ENCODE measurements at regions of chr16 and their contacts with region 1.

Region 1: GRCh38 chr16:66872943-66873684 is 7.2 kb upstream of the PDP2 start:
- DNase-seq: peak; percentile 80 to 94 (median 82)
- H3K4me3 ChIP-seq: peak overlapping the region in 1 of 2 donors; percentile 52
- H3K4me3 Mint-ChIP-seq: peak overlapping the region; percentile 61 to 90 (median 82)
- H3K27ac ChIP-seq: peak overlapping the region; percentile 36
- H3K27ac Mint-ChIP-seq: peak overlapping the region; percentile 75 to 95 (median 86)
- H3K4me1 ChIP-seq: peaks cover 22% of the 10 kb centered on the region
- H3K4me1 Mint-ChIP-seq: peaks cover 18 to 37% (median 23%) of the 10 kb centered on the region in 4 donors
- H3K27me3 ChIP-seq: no peaks in the 10 kb centered on the region
- H3K27me3 Mint-ChIP-seq: no peaks in the 10 kb centered on the region

Region 2: DNA sequence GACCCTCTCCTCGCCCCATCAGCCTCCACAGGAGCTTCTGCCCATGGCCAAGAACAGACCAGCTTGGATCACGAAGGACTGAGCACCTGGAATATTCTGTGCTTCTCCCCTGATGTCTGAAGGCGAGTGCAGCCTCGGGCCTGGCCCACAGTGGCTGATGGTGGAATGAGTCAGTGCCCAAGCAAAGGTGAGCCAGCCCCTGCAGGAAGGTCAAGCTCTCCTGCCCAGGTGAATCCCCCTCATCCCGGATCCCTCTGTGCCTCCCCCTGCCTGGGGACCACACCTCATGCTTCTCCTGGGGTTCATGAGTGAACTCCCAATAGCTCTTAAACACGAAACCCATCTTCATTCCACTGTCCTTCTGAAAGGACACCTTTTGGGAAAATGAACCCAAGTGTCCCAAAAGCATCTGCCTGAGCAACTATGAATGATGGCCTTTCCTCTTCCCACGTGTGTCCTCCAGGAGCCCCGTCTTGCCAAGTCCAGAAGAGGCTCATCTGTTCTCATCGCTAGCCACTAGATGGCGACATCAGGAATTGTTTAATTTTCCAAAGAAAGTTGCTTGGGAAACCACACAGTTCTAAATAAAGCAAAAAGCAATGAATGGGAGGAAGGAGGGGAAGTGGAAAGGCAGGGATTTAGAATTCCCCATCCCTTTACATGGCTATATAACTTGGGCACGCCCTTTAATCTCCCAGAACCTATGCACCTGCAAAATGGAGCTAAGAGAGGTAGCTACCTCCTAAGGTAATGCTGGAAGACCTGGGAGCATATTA is 515.8 kb before region 1 on chr16:
- CTCF ChIA-PET with region 1: interaction called, 7 read pairs
- POLR2A ChIA-PET with region 1: no interaction called
- intact Hi-C with region 1: loop called (anchors 5 kb)
- DNase-seq: peak in 3 of 5 donors; percentile 11 to 19 (median 16)
- H3K4me3 ChIP-seq: no peak overlapping the region
- H3K4me3 Mint-ChIP-seq: no peak overlapping the region
- H3K27ac ChIP-seq: no peak overlapping the region
- H3K27ac Mint-ChIP-seq: peak overlapping the region in 1 of 7 donors; percentile 24
- H3K4me1 ChIP-seq: peaks cover 5% of the 10 kb centered on the region
- H3K4me1 Mint-ChIP-seq: peaks cover 0 to 5% (median 2%) of the 10 kb centered on the region in 4 donors
- H3K27me3 ChIP-seq: no peaks in the 10 kb centered on the region
- H3K27me3 Mint-ChIP-seq: peaks cover 34 to 38% of the 10 kb centered on the region in 2 donors

Region 3: DNA sequence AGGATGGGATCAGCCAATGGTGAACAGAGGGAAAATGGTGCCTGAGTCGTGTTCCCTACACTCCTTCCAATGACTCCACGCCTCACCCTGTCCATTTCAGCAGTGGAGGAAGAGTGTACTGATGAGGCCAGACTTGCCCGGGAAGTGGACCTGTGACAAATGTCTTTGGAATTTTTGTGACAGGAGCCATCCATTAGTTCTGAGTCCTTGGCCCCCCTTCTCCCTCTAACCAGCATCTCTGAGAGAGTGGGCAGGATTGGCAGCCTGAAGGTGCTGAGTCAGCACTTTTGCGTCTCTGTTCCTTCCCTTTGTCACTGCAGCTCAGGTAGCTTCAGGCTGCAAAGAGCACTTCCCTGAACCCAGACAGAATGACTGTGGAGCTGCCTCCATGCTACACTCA is 415.2 kb before region 1 on chr16:
- CTCF ChIA-PET with region 1: no interaction called
- POLR2A ChIA-PET with region 1: no interaction called
- intact Hi-C with region 1: no loop called
- DNase-seq: no peak
- H3K4me3 ChIP-seq: no peak overlapping the region
- H3K4me3 Mint-ChIP-seq: no peak overlapping the region
- H3K27ac ChIP-seq: no peak overlapping the region
- H3K27ac Mint-ChIP-seq: no peak overlapping the region
- H3K4me1 ChIP-seq: no peaks in the 10 kb centered on the region
- H3K4me1 Mint-ChIP-seq: no peaks in the 10 kb centered on the region
- H3K27me3 ChIP-seq: no peaks in the 10 kb centered on the region
- H3K27me3 Mint-ChIP-seq: peaks cover 7 to 19% of the 10 kb centered on the region in 2 donors

Region 4: DNA sequence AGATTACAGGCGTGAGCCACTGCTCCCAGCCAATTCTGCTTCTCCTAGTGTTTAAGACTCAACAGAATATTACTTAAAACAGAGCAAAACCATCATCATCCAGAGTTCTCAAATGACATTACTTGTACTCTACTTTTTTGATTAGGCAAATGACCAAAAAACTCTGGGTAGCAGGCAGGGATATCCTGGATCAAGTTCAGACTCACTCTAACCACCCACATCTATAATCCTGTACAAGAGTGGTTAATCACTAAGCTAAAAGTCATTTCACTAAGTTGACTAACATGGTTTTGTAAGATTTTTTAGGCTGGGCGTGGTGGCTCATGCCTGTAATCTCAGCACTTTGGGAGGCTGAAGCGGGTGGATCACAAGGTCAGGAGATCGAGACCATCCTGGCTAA is 49.1 kb before region 1 on chr16:
- CTCF ChIA-PET with region 1: interaction called, 95 read pairs
- POLR2A ChIA-PET with region 1: interaction called, 15 read pairs
- intact Hi-C with region 1: no loop called
- DNase-seq: no peak
- H3K4me3 ChIP-seq: no peak overlapping the region
- H3K4me3 Mint-ChIP-seq: no peak overlapping the region
- H3K27ac ChIP-seq: no peak overlapping the region
- H3K27ac Mint-ChIP-seq: no peak overlapping the region
- H3K4me1 ChIP-seq: peaks cover 22% of the 10 kb centered on the region
- H3K4me1 Mint-ChIP-seq: peaks cover 17 to 30% (median 20%) of the 10 kb centered on the region in 4 donors
- H3K27me3 ChIP-seq: no peaks in the 10 kb centered on the region
- H3K27me3 Mint-ChIP-seq: no peaks in the 10 kb centered on the region

Region 5: DNA sequence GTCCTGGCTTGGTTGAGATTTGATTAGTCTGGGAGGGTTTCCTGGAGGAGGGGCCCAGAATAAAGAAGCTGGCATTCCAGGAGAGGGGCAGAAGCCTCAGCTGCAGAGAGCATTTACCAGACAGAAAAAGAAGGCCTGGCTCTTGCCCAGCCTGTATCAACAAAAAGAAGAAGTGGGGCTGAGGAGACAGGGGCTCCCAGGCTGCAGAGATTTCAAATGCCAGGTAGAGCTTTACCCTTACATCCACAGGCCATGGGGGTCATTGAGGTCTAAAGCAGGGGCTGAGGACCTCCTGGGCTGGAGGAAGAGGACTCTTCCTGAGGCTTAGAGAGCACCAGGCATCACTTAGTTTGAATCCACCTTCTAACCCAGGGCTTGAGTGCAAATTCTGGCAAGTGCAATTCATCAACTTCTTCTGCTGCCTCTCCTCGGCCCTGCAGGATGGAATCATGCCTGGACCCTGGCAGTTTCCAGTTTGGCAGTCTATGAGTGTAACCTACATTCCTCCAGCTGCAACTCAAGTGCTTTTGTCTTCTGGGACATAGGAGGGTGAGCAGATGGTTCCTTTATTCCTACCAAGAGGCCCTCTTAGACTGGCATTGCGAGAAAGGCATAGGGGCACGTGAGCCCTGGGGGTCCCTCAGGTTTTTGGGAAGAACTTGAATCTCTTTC is 13.6 kb before region 1 on chr16:
- CTCF ChIA-PET with region 1: interaction called, 11 read pairs
- POLR2A ChIA-PET with region 1: interaction called, 3 read pairs
- intact Hi-C with region 1: no loop called
- DNase-seq: no peak
- H3K4me3 ChIP-seq: no peak overlapping the region
- H3K4me3 Mint-ChIP-seq: no peak overlapping the region
- H3K27ac ChIP-seq: no peak overlapping the region
- H3K27ac Mint-ChIP-seq: peak overlapping the region in 3 of 7 donors; percentile 10 to 57 (median 23)
- H3K4me1 ChIP-seq: no peaks in the 10 kb centered on the region
- H3K4me1 Mint-ChIP-seq: no peaks in the 10 kb centered on the region
- H3K27me3 ChIP-seq: no peaks in the 10 kb centered on the region
- H3K27me3 Mint-ChIP-seq: no peaks in the 10 kb centered on the region

Region 6: DNA sequence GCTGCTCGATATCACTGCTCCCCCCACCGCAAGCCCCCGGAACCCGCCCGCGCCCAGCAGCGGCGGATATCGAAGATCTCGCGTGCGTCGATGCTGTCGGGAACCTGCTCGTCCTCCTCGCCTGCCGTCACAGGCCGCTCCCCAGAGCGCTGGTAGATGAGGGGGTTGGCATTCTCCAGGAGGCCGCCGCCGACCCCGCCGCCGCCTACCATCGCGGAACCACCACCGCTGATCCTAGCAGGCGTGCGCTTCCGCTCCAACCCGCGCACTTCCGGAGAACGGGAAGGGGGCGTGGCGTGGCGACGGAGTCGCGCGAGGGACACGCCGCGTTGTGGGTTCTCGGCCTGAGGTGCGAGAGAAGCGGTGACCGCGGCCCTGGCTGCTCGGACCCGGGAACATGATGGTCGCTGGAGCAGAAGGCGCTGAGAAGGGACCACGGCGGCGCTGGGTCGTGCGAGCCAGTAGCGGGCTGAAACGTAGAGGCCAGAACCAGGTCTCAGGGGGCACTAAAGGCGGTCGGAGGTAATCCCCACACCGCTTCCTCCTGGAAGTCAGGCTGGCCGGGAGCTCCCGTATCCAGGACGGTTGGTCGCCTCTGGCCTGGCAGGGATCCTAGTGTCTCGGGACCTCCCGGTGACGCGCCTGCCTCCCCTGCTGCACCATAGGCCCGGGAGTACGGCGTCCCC is 61.2 kb after region 1 on chr16 and contains the start of gene CIAO2B:
- CTCF ChIA-PET with region 1: interaction called, 7 read pairs
- POLR2A ChIA-PET with region 1: interaction called, 4 read pairs
- intact Hi-C with region 1: loop called (anchors 2 kb)
- DNase-seq: peak; percentile 88 to 93 (median 90)
- H3K4me3 ChIP-seq: peak within 1 kb of the TSS; percentile 88 to 98
- H3K4me3 Mint-ChIP-seq: peak within 1 kb of the TSS; percentile 93 to 100 (median 99)
- H3K27ac ChIP-seq: peak within 1 kb of the TSS; percentile 97
- H3K27ac Mint-ChIP-seq: peak within 1 kb of the TSS; percentile 97 to 99 (median 99)
- H3K4me1 ChIP-seq: peaks cover 49% of the 10 kb centered on the region
- H3K4me1 Mint-ChIP-seq: peaks cover 31 to 72% (median 51%) of the 10 kb centered on the region in 4 donors
- H3K27me3 ChIP-seq: no peaks in the 10 kb centered on the region
- H3K27me3 Mint-ChIP-seq: no peaks in the 10 kb centered on the region
- total RNA-seq, gene CIAO2B: 72.7 to 75.0 TPM

Measured in CD4-positive, alpha-beta memory T cell (primary cell).